ENCODE measurements at regions of chr9 and their contacts with region 1.

Region 1: DNA sequence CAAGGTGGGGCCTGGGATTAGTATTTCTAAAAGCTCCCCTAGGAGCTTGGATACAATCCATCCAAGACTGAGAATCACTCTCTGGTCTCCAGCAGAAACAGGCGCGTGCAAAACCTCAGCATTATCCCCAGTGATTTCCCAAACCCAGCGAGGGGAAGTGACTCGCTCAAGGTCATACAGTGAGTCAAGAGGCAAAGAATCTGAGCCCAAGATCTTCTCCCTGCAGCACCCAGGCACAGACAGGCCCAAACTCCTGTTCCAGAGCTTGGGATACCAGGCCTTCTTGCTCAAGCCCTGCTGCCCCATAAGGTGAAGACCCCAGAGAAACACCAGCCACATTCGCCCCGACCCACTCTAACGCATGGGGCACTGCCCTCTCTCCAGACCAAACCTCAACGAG is 33.2 kb downstream of the SHB start:
- DNase-seq: peak; percentile 72
- H3K4me3 Mint-ChIP-seq: no peak overlapping the region
- H3K27ac Mint-ChIP-seq: peak overlapping the region; percentile 86
- H3K4me1 Mint-ChIP-seq: peaks cover 29% of the 10 kb centered on the region
- H3K27me3 Mint-ChIP-seq: no peaks in the 10 kb centered on the region
- CTCF ChIP-seq: no peak

Region 2: GRCh38 chr9:37787059-37787458 is 248.8 kb before region 1 on chr9:
- CTCF ChIA-PET with region 1: no interaction called
- POLR2A ChIA-PET with region 1: no interaction called
- intact Hi-C with region 1: no loop called
- DNase-seq: no peak
- H3K4me3 Mint-ChIP-seq: no peak overlapping the region
- H3K27ac Mint-ChIP-seq: no peak overlapping the region
- H3K4me1 Mint-ChIP-seq: peaks cover 10% of the 10 kb centered on the region
- H3K27me3 Mint-ChIP-seq: no peaks in the 10 kb centered on the region
- CTCF ChIP-seq: no peak

Region 3: DNA sequence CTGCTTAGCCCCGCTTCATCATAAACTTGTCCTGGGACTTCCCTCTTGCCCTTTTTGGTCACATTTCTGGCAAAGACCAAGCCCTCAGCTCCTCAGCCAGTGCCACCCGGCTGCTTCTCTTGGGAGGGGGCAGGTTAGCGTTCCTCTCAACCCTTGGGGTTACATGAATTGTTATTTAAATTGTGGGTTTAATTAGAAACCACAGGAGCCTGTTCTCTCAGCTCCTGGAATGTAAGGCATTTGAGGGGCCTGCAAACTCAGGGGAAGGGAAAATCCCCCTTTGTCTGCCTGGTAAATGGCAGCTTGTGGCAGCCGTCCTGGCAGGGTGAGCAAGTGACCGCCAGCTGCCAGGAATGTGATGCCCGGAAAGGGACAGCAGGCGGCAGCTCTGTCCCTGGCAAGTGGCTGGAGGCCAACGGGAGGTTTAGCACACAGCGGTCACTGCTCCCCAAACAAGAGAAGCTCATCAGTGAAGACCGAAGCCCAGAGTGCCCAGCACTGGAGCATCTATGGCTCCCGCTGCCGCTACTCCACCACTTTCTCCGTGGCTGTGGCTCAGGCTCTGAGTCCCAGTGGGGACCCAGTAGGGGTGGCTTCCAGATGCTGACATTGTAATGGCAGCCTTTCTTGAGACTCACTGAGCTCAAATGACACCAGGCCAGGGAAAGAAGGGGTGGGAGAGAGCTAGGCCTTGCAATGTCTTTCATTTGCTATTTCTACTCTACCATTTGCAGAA is 18.6 kb before region 1 on chr9:
- CTCF ChIA-PET with region 1: interaction called, 4 read pairs
- POLR2A ChIA-PET with region 1: interaction called, 13 read pairs
- intact Hi-C with region 1: no loop called
- DNase-seq: peak; percentile 54
- H3K4me3 Mint-ChIP-seq: no peak overlapping the region
- H3K27ac Mint-ChIP-seq: peak overlapping the region; percentile 90
- H3K4me1 Mint-ChIP-seq: peaks cover 47% of the 10 kb centered on the region
- H3K27me3 Mint-ChIP-seq: no peaks in the 10 kb centered on the region
- CTCF ChIP-seq: no peak

Measured in MCF 10A (cell line).